Left cardiac atrium (tissue), 4 donors: ENCODE measurements at regions of chr12 and their contacts with region 1.

Region 1: DNA sequence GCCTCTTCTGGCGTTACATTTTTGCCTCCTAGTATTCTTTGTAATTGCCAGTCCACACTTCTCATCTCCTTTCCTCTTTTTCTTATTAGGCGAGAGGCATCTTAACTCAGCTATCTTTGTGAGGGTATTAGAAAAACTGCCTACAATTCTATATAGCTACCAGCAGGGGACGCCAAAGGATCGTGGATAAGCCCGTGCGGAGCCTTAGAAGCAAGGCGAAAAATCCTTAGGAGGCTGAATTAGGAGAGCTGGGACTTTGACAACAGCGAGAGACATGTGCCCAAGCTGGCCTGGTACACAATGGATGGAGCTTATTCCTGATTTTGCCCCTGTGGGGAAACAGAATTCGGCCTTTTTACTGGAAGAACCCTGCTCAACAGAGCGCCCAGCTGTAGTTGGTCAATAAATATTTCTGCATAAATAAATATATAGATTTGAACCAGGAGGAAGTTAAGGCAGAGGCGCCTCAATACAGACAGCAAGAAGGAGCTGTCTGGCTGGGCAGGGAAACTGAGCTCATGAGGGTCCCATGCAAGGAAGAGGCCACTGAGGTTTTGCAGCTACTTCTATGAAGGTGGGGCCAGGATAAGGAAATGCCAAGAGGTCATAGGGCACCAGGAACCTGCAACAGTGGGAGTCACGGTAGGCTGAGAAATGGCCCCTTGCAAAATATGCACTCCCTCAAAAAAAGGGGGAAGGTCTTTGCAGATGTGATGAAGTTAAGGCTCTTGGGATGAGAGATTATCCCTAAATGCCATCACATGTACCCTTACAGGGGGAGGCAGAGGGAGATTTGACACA is 14.6 kb upstream of the RBM19 start:
- DNase-seq: peak; percentile 28
- ATAC-seq: peak; percentile 64 to 86

Region 2: DNA sequence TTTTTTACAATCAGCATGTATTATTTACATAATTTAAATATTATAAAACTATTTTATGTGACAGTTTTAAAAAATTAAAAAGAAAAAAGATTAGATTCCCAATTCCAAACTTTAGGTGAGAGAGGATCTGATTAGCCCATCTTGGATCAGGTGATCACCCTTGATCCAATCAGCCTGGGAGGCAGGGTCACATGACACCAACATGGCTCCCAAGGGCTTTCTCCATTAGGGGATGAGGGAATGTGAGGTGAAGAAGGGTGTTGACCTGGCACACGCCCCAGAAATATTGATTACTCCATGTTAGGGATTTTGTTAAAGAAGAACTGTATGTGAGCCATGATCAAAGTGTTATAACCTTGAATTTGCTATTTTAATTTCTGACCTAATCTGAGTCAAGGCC is 240.0 kb before region 1 on chr12:
- intact Hi-C with region 1: no loop called
- DNase-seq: no peak
- ATAC-seq: no peak

Region 3: DNA sequence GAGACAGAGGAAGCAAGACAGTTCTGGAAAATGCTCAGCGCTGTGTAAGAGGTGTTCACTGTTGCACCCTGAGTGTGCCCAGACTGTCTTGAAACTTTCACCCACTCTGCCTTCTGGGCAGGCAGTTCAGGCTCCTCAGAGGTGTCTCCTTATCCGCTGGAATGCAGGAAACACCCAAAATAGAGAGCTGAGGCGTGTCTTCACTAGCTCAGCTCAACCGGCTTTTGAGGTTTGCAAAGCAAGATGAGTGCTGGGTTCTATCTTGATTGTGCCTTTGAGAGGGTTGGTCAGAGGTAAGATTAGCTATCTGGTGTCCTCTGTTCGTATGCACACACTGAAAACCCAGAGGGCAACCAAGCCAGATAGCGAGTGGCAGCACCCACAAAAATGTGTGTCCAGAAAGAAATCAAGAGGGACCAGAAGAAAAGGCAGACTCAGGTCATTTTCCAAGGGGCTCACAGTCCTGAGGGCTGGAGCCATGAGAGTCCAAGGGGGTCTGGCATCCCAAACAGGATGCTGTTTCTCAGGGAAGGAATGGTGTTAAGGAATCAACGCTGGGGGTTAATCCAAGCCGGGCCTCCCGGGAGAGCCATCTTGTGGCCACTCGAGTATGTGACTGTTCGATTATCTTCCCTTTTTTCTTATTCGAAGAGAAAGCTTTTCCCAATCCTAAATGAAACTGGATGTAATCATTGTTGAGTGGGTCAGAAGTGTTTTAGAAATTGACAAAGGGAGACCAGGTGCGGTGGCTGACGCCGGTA is 656.2 kb after region 1 on chr12:
- intact Hi-C with region 1: loop called (anchors 5 to 10 kb)
- DNase-seq: no peak
- ATAC-seq: no peak